K562 (cell line): ENCODE measurements at regions of chr10 and their contacts with region 1.

Region 1: GRCh38 chr10:71696628-71697326 is 22.8 kb downstream of the C10orf105 start:
- DNase-seq: peak; percentile 86 to 92 (median 90)
- ATAC-seq: peak; percentile 94
- H3K4me3 ChIP-seq: no peak overlapping the region
- H3K27ac ChIP-seq: no peak overlapping the region
- H3K4me1 ChIP-seq: peaks cover 13 to 51% of the 10 kb centered on the region in 2 experiments
- H3K27me3 ChIP-seq: no peaks in the 10 kb centered on the region
- CTCF ChIP-seq: peak; percentile 93 to 99 (median 95)
- EP300 ChIP-seq: no peak
- POLR2A ChIP-seq: no peak
- RAD21 ChIP-seq: peak; percentile 64 to 89

Region 2: DNA sequence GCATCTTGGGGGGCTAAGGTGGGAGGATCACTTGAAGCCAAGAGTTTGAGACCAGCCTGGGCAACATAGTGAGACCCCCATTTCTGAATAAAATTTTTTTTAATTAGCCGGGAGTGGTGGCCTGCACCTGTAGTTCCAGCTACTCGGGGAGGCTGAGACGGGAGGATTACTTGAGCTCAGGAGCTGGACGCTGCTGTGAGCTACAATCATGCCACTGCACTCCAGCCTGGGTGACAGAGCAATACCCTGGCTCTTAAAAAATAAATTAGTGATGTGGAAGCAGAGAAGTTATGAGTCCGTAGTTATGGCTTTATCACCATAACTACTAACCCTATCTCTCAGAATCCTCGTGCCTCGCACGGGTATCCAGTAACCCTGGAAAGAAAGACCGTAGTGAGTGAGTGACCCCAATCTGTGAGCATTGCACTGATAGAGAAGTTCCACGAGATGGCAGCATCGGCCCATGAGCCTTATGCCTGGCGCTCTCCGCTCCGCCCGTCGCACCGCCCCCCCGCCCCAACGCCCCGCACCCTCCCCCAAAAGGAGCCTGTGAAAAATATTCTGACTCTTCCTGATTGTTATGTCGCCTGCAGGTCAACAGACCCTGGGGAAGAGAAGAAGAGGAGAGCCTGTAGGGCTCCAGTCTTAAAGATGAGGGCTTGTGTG is 382.6 kb before region 1 on chr10:
- CTCF ChIA-PET with region 1: interaction called, 5 read pairs
- POLR2A ChIA-PET with region 1: interaction called, 3 read pairs
- in situ Hi-C with region 1: loop called (anchors 5 kb)
- intact Hi-C with region 1: no loop called
- DNase-seq: peak; percentile 79 to 91 (median 90)
- ATAC-seq: peak; percentile 73
- H3K4me3 ChIP-seq: no peak overlapping the region
- H3K27ac ChIP-seq: no peak overlapping the region
- H3K4me1 ChIP-seq: peaks cover 8 to 9% of the 10 kb centered on the region in 2 experiments; a peak in 4 of 5 replicates
- H3K27me3 ChIP-seq: peaks cover 0 to 10% of the 10 kb centered on the region in 2 experiments; a peak in 2 of 5 replicates
- CTCF ChIP-seq: peak; percentile 68 to 82 (median 76)
- EP300 ChIP-seq: no peak
- POLR2A ChIP-seq: no peak
- RAD21 ChIP-seq: peak; percentile 64 to 78

Region 3: GRCh38 chr10:71383972-71384687 is 312.6 kb before region 1 on chr10:
- CTCF ChIA-PET with region 1: no interaction called
- POLR2A ChIA-PET with region 1: interaction called, 3 read pairs
- in situ Hi-C with region 1: loop called (anchors 10 kb)
- intact Hi-C with region 1: loop called (anchors 5 kb)
- DNase-seq: peak; percentile 86 to 92 (median 90)
- ATAC-seq: peak; percentile 98
- H3K4me3 ChIP-seq: no peak overlapping the region
- H3K27ac ChIP-seq: no peak overlapping the region
- H3K4me1 ChIP-seq: peaks cover 3 to 9% of the 10 kb centered on the region in 2 experiments; a peak in 3 of 5 replicates
- H3K27me3 ChIP-seq: peaks cover 5 to 10% of the 10 kb centered on the region in 2 experiments
- CTCF ChIP-seq: peak; percentile 95 to 98 (median 95)
- EP300 ChIP-seq: no peak
- POLR2A ChIP-seq: no peak
- RAD21 ChIP-seq: peak; percentile 82 to 92

Region 4: DNA sequence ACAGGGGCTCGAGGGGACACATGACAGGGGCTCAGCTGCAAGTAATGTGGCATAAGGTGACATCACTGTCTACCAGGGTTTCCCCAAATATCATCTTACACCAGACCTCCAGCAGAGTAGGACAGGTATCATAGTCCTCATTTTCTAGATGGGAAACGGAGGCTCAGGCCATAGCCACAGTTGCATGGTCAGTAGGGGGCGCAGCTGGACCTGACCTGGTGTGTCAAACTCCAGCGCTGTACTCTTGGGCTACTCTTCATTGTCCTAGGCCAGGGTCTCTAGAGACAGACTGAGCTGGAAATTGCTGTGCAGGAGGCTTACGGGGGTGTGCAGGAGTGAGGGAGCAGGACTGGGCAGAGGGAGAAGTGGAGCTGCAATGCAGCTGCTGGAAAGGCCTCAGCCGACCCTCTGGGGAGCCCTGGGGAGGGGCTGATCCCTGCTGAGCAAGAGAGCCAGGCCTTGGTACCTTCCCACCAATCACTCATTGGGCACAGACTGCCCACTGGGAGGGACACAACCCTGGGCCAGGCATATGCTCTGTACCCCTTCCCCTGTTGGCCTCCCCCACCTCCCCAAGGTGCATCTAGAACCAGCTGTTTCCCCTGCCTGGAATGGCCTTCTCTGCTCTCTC is 210.2 kb before region 1 on chr10:
- CTCF ChIA-PET with region 1: no interaction called
- POLR2A ChIA-PET with region 1: interaction called, 3 read pairs
- in situ Hi-C with region 1: no loop called
- intact Hi-C with region 1: loop called (anchors 5 kb)
- DNase-seq: peak; percentile 66 to 82 (median 73)
- ATAC-seq: peak; percentile 98
- H3K4me3 ChIP-seq: no peak overlapping the region
- H3K27ac ChIP-seq: no peak overlapping the region
- H3K4me1 ChIP-seq: no peaks in the 10 kb centered on the region
- H3K27me3 ChIP-seq: peaks cover 24 to 39% of the 10 kb centered on the region in 2 experiments; a peak in 4 of 5 replicates
- CTCF ChIP-seq: peak; percentile 85 to 93 (median 91)
- EP300 ChIP-seq: no peak
- POLR2A ChIP-seq: no peak
- RAD21 ChIP-seq: peak; percentile 51 to 87

Region 5: DNA sequence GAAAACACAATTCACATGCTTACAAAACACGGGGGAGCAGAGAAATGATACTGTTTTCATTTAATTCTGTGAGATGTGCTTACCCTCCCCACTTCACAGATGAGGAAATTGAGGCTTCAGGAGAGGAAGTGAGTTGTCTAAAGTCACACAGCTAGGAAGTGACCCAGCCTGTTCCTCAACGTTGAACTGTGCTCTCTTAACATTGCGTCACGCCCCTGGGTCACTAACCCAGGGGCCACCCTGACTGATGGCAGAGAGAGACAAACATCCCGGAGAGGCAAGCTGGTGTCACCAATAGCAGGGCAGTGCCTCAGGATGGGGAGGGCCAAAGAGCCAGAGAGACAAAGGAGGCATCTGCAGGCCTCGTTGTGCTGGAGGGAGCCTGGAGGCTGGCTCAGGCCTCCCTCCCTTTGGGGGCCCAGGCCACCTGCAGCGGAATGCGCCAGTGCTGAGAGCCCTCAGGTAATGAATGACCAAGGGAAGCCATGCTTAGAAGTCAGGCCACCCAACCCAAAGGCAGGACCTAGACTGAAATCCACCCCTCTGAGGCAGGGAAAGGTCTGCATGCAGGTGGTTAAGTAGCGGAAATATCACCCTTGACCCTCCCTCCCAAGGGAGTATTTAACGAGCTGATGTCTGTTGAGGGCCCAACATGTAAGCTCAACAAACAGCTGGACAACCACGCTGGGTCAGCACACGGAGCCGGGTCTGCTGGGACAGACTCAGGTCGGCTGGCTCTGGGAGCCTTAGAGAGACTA is 58.5 kb before region 1 on chr10:
- CTCF ChIA-PET with region 1: no interaction called
- POLR2A ChIA-PET with region 1: no interaction called
- in situ Hi-C with region 1: no loop called
- intact Hi-C with region 1: loop called (anchors 5 kb)
- DNase-seq: peak; percentile 67 to 94 (median 82)
- ATAC-seq: peak; percentile 75
- H3K4me3 ChIP-seq: no peak overlapping the region; the same call in 1 of the 2 replicates
- H3K27ac ChIP-seq: peak overlapping the region; percentile 80
- H3K4me1 ChIP-seq: peaks cover 69 to 91% of the 10 kb centered on the region in 2 experiments
- H3K27me3 ChIP-seq: no peaks in the 10 kb centered on the region; a peak in 1 of 5 replicates
- CTCF ChIP-seq: no peak
- EP300 ChIP-seq: peak; percentile 62
- POLR2A ChIP-seq: peak; percentile 76
- RAD21 ChIP-seq: no peak